HEK293T (cell line): ENCODE measurements at regions of chr17 and their contacts with region 1.

Region 1: GRCh38 chr17:30997842-30998241 is 27.0 kb downstream of the RNF135 start:
- DNase-seq: no peak

Region 2: GRCh38 chr17:30961209-30962188 is 36.3 kb before region 1 on chr17:
- CTCF ChIA-PET with region 1: no interaction called
- POLR2A ChIA-PET with region 1: no interaction called
- DNase-seq: no peak

Region 3: GRCh38 chr17:31008374-31009041 is 10.7 kb after region 1 on chr17:
- CTCF ChIA-PET with region 1: no interaction called
- POLR2A ChIA-PET with region 1: interaction called, 14 read pairs
- DNase-seq: peak; percentile 41